H1 (cell line): ENCODE measurements at regions of chr11 and their contacts with region 1.

Region 1: GRCh38 chr11:75603791-75604736 is 42.0 kb downstream of the SERPINH1 start:
- DNase-seq: no peak
- H3K4me3 ChIP-seq: no peak overlapping the region
- H3K27ac ChIP-seq: no peak overlapping the region
- H3K4me1 ChIP-seq: peaks cover 0 to 4% (median under 1%) of the 10 kb centered on the region in 4 experiments; a peak in 3 of 7 replicates
- H3K27me3 ChIP-seq: no peaks in the 10 kb centered on the region
- CTCF ChIP-seq: no peak
- EP300 ChIP-seq: no peak
- POLR2A ChIP-seq: no peak
- RAD21 ChIP-seq: no peak

Region 2: GRCh38 chr11:75450826-75451821 is 152.9 kb before region 1 on chr11:
- CTCF ChIA-PET with region 1: no interaction called
- POLR2A ChIA-PET with region 1: no interaction called
- DNase-seq: peak in 1 of 2 experiments; percentile 97
- H3K4me3 ChIP-seq: peak overlapping the region in 3 of 4 experiments; percentile 3 to 27 (median 5); a peak in 2 of 8 replicates
- H3K27ac ChIP-seq: no peak overlapping the region
- H3K4me1 ChIP-seq: peaks cover 0 to 6% (median 0%) of the 10 kb centered on the region in 4 experiments; a peak in 3 of 7 replicates
- H3K27me3 ChIP-seq: no peaks in the 10 kb centered on the region; a peak in 1 of 7 replicates
- CTCF ChIP-seq: peak; percentile 87 to 93 (median 93)
- EP300 ChIP-seq: no peak
- POLR2A ChIP-seq: no peak
- RAD21 ChIP-seq: peak; percentile 66 to 80

Region 3: DNA sequence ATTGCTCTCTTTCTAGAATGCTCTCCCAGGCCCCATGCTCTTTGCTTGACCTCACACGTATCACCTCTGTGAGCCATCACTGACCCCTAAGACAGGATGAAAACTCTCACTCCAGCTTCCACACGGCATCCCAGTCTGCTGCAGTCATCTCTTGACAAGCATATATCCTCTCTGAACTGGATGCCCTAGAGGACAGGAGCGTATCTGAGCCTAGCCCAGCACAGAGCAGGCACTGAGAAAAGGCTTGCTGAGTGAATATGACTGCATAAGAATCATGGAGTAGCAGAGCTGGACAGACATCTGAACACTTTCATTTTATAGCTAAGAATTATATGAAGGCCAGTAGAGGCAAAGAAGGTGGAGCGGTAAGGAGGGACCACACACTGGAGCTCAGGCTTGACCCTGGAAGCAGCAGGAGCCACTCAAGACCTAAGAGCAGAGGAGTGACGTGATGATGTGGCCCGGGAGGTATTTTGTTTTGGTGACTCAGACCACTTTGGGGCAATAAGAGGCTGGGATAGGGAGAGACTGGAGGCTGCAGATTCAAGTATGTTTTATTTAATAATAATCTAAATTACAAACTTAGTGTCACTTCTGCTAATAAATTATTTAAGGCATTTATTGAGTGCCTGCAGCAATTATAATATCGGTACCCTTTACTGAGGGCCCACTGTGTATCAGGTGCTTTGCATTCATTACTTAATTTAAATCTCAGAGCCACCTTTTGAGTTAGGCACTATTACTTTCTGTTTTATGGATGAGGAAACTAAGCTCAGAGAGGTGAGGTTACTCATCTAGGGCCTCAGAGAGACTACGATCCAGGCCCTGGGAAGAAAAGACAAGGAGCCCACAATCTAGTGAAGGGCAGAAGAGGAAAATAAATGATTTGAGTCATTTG is 22.2 kb after region 1 on chr11:
- CTCF ChIA-PET with region 1: interaction called, 28 read pairs
- POLR2A ChIA-PET with region 1: no interaction called
- DNase-seq: no peak
- H3K4me3 ChIP-seq: no peak overlapping the region
- H3K27ac ChIP-seq: no peak overlapping the region
- H3K4me1 ChIP-seq: peaks cover 0 to 20% (median 13%) of the 10 kb centered on the region in 4 experiments; a peak in 6 of 7 replicates
- H3K27me3 ChIP-seq: no peaks in the 10 kb centered on the region
- CTCF ChIP-seq: no peak
- EP300 ChIP-seq: no peak
- POLR2A ChIP-seq: no peak
- RAD21 ChIP-seq: no peak